Astrocyte of the cerebellum (primary cell): ENCODE measurements at regions of chr7 and their contacts with region 1.

Region 1: GRCh38 chr7:48109848-48110663 is 21.0 kb downstream of the UPP1 start:
- DNase-seq: no peak
- H3K4me3 ChIP-seq: no peak overlapping the region
- CTCF ChIP-seq: peak; percentile 93

Region 2: GRCh38 chr7:47979145-47979831 is 130.8 kb before region 1 on chr7 and contains the start of gene HUS1:
- in situ Hi-C with region 1: loop called (anchors 25 kb)
- DNase-seq: peak; percentile 51
- H3K4me3 ChIP-seq: peak within 1 kb of the TSS; percentile 59
- CTCF ChIP-seq: no peak

Region 3: DNA sequence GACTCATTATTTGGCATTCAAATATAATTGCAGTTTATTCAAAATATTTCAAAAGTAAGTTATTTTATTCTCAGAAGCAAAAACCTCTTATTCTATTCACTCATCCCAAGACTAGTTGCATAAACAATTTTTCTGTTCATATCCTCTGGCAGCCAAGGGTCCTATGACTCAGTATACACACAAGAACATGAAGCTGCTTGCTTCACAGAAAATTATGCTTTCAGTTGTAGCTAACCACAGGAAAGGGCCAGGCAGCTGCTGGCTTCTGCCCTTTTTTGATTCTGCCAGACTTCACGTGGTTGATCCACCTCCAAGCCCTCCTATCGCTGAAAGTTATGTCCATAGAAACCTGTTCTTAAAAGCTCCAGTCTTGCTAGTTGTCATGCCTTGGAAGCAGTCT is 170.0 kb after region 1 on chr7:
- in situ Hi-C with region 1: no loop called
- DNase-seq: peak; percentile 89
- H3K4me3 ChIP-seq: no peak overlapping the region
- CTCF ChIP-seq: no peak

Region 4: DNA sequence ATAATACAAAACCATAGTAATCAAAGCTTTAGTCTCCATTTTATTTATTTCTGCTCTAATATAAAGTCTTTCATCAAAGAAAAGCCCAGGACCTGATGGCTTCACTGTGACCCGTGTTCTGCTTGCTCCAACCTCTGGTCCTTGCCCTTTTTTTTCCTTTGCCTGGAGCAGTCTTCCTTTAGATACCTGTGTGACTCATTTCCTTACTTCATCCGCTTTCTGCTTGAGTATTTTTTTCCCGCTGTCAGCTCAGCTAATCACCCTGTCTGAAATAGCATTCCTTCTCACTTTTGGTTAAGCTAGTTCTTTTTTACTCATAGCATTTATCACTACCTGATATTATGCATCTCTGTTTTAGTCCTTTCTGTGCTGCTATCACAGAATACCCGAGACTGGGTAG is 256.0 kb after region 1 on chr7:
- in situ Hi-C with region 1: no loop called
- DNase-seq: no peak
- H3K4me3 ChIP-seq: no peak overlapping the region
- CTCF ChIP-seq: no peak

Region 5: DNA sequence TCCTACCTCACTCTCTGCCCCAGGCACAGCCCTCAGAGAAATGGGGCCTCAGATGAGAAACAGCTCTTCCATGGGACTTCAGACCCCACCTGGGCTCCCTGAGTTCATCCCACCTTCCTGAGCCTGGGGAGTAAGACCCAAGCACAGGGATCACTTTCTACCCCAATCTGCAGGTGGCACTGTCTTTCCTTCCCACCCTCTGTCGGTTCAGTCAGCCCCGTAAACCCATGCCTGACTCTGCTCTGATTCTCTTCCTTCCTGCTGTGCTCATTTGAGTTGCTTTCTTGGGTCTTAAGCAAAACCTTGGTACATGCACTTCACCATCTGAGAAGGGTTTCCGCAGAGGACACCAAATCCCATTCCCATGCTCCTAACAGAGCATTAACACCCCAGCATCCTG is 507.9 kb after region 1 on chr7:
- in situ Hi-C with region 1: no loop called
- DNase-seq: no peak
- H3K4me3 ChIP-seq: no peak overlapping the region
- CTCF ChIP-seq: no peak